Aorta (tissue), 5 donors: ENCODE measurements at regions of chr14 and their contacts with region 1.

Region 1: GRCh38 chr14:77707724-77708408 is at the starts of genes ALKBH1 and SLIRP:
- DNase-seq: peak; percentile 92 to 95
- ATAC-seq: peak; percentile 96
- H3K4me3 ChIP-seq: peak within 1 kb of the TSS; percentile 95 to 99
- H3K27ac ChIP-seq: peak within 1 kb of the TSS in 1 of 2 donors; percentile 67
- H3K4me1 ChIP-seq: peaks cover 4 to 15% of the 10 kb centered on the region in 2 donors
- H3K27me3 ChIP-seq: no peaks in the 10 kb centered on the region
- total RNA-seq, gene ALKBH1: 7.4 to 12.6 TPM
- total RNA-seq, gene SLIRP: 57.3 to 84.4 TPM

Region 2: GRCh38 chr14:77616454-77617229 is 91.2 kb before region 1 on chr14 and contains the start of gene SPTLC2:
- intact Hi-C with region 1: loop called in 1 of 2 experiments (anchors 5 kb)
- DNase-seq: peak; percentile 99
- ATAC-seq: peak; percentile 98
- H3K4me3 ChIP-seq: peak within 1 kb of the TSS; percentile 93 to 95
- H3K27ac ChIP-seq: peak within 1 kb of the TSS in 1 of 2 donors; percentile 66
- H3K4me1 ChIP-seq: peaks cover 0 to 2% of the 10 kb centered on the region in 2 donors
- H3K27me3 ChIP-seq: no peaks in the 10 kb centered on the region
- total RNA-seq, gene SPTLC2: 37.8 to 45.4 TPM

Region 3: DNA sequence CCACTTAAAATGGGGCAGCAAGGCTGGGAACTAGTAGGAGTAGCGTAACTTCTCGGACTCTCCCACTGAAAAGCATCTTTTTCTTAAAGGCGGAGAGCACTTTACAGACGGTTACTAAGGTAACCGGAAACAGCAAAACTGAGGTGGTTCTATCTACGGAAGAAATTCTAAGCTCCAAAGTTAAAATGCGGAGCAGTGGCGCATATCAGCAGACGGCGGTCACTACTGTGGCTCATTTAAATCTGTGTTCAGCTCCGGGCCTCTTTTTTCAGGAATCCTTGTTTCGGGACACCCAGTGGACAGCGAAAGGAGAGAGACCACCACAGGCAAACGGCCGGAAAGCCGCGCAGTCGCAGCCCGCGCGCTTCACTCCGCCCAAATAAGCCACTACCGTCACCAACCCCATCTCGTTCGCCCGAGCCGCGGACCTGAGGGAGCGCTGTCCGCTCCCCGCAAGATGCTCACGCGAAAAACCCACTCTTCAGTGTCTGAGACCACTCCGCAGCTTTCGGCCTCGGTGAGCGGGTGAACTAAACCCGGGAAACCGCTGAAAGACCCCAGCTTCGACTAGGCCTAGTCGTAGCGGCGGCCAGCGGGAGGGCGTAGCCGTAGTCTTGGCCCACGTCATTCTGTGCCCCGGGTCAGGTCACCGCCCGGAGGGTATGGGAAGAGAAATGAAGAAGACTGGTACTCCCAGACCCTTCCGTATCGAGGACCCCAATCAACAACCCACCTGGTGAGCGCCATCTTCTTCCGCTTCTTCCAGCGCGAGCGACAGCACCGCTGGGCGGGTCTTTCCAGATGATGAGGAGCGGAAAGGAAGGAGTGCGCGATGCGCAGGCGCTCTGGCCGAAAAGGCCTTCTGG is 52.7 kb after region 1 on chr14 and contains the start of gene SNW1:
- intact Hi-C with region 1: loop called in 1 of 2 experiments (anchors 5 kb)
- DNase-seq: peak; percentile 95 to 96
- ATAC-seq: peak; percentile 98
- H3K4me3 ChIP-seq: peak within 1 kb of the TSS; percentile 79 to 86
- H3K27ac ChIP-seq: peak within 1 kb of the TSS; percentile 45 to 89
- H3K4me1 ChIP-seq: peaks cover 4 to 5% of the 10 kb centered on the region in 2 donors
- H3K27me3 ChIP-seq: no peaks in the 10 kb centered on the region
- total RNA-seq, gene SNW1: 51.4 to 60.5 TPM